ENCODE measurements at regions of chr11 and their contacts with region 1.

Region 1: DNA sequence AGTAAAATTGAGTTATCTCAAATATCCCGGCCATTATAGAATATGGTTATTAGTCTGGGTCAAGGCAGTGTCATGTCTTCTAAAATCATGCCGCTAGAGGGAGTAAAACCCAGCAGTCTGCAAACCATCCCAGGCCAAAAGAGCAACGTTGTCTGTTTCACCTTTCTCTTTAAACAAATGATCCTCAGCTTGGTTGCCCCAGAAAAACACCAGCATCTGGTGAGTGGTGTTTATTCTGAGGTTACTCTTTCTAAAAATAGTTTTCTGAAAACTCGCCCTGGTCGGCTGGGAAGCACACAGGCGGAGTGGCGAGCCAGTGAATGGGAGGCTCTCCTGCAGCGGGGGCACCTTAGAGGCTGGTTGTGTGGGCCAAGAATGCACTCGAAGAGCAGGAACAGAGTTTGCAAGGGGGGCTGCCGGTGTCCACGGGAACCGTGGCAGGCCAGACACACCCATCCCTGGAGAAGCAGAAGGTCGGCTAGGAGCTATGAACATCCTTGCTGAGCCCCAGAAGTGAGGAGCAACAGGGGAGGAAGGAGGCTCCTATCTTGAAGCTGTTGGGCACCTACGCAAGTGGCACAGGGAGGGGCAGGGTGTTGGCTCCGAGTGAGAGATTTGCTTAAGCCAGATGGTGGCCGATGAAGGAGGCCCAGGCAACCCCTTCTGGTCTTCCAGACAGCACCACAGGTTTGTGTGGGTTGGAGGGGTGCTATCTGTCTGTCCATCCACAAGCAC is 297.1 kb downstream of the ETS1 start:
- DNase-seq: peak; percentile 58
- H3K4me3 Mint-ChIP-seq: peak overlapping the region; percentile 30
- H3K27ac Mint-ChIP-seq: peak overlapping the region; percentile 82
- H3K4me1 Mint-ChIP-seq: peaks cover 30% of the 10 kb centered on the region
- H3K27me3 Mint-ChIP-seq: no peaks in the 10 kb centered on the region
- CTCF ChIP-seq: peak; percentile 35

Region 2: DNA sequence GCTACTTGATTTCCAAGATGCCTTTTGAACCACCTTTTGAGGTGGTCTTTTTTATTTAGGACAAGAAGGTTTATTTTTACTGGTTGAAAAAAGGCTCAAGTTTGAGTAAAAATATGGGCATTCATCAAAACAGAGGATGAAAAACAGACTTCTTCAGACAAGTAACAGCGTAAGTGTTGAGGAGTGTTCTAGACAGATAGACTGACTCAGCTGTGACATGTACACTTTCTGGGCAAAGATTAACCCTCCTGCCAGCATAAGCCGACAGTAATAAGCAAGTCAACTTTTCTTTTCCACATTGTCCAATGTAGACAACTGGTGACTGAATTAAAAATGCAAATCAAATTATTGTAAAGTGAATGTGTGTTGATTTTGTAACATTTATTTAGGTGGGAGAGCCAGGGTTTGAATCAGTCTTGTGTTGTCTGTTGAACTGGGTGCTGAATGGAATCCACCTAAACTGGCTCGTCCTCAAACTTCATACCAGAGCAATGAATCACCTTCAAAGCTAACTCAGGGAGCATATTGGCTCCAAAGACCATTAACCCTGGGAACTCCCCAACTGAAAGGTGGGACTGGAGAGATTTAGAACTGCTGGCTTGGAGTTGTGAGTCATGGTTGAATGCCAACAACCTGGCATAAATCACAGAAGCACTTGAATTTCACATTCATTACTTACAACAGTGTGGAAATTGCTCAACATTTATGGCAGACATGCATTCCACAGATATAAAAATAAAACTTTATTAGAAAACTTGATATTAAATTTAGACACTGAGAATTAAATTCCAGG is 79.9 kb before region 1 on chr11:
- CTCF ChIA-PET with region 1: interaction called, 3 read pairs
- intact Hi-C with region 1: loop called (anchors 2 kb)
- DNase-seq: peak; percentile 76
- H3K4me3 Mint-ChIP-seq: no peak overlapping the region
- H3K27ac Mint-ChIP-seq: peak overlapping the region; percentile 72
- H3K4me1 Mint-ChIP-seq: peaks cover 33% of the 10 kb centered on the region
- H3K27me3 Mint-ChIP-seq: no peaks in the 10 kb centered on the region
- CTCF ChIP-seq: no peak

Region 3: DNA sequence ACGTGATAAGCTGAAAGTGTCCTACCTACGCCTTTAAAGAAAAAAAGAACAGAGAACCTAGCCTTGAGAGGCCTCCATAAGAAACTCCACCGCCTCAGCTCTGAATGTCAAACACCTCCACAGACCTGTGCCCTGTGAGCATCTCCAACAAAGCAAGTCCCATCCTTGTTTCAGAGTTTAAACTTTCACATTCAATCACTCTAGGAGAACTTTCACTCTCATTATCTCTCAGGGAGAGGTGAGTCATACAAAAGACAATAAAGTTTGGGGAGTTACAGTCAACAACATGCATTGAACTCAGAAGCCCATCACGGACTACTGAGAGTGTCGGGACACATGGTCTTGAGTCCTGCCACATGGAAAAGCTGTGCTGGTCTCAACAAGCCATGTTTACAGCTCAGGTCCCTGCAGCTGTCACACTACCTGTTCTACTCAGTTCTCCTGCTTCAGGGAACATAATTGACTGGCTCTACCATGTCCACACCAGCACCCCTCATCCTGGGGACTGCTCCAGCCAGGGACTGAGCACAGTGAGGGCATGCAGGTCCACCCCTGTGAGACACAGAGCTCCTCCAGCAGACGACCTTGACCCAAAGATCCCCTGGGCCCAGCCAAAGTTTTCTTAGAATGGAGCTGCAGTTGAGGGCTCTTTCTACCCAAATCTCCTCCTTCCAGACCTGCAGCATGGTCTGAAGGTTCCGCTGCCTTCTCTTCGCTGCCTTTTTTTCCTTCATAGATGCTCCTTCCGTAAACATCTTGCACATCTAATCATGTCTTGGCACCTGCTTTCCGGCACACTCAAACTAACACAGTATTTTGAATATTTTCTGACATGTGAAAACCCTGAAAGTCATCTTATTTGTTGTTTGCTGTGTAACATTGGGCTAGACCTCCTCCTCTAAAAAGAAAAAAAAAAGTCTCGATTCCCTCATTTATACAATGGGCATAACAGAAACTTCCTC is 182.1 kb after region 1 on chr11:
- CTCF ChIA-PET with region 1: interaction called, 5 read pairs
- intact Hi-C with region 1: loop called (anchors 5 kb)
- DNase-seq: no peak
- H3K4me3 Mint-ChIP-seq: no peak overlapping the region
- H3K27ac Mint-ChIP-seq: no peak overlapping the region
- H3K4me1 Mint-ChIP-seq: peaks cover 59% of the 10 kb centered on the region
- H3K27me3 Mint-ChIP-seq: no peaks in the 10 kb centered on the region
- CTCF ChIP-seq: no peak

Region 4: DNA sequence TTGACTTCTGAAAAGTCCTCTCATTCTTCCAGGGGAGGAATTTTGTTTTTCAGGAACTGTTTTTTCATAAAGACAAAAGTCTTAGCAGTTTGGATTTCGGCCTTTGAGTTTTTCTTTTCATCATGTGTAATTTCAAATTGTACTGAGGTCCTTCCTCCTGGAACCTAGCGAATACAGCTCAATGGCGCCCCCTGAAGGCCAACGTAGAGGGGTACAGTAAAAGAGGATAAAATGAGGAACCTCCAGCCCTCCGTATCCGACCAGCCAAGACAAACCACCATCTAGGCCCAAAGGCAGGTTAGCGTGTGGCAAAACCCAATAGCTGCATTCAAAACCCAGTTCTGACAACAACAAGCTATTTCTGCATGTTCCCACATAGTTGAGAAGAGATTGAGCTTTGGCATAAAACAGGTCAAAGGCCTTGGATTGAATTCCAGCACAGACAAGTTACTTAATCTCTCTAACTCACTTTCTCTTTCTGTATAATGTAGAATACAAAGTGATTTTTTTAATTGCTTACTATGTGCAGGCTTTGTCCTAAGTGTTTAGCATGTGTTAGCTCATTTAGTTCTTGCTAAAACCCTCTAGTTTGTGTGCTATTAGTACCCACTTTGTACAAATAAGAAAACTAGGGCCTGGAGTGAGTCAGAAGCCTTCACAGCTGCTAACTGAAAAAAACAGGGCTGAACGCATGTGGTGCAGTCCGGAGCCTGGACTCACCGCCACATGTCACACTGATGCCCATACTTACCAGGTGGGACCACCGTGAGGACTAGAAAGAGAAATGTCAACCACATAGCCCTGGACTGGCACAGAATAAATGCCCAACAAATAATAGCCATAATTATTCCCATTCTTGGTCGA is 340.3 kb after region 1 on chr11:
- CTCF ChIA-PET with region 1: interaction called, 9 read pairs
- intact Hi-C with region 1: loop called (anchors 1 kb)
- DNase-seq: peak; percentile 81
- H3K4me3 Mint-ChIP-seq: no peak overlapping the region
- H3K27ac Mint-ChIP-seq: no peak overlapping the region
- H3K4me1 Mint-ChIP-seq: no peaks in the 10 kb centered on the region
- H3K27me3 Mint-ChIP-seq: no peaks in the 10 kb centered on the region
- CTCF ChIP-seq: peak; percentile 44

Region 5: DNA sequence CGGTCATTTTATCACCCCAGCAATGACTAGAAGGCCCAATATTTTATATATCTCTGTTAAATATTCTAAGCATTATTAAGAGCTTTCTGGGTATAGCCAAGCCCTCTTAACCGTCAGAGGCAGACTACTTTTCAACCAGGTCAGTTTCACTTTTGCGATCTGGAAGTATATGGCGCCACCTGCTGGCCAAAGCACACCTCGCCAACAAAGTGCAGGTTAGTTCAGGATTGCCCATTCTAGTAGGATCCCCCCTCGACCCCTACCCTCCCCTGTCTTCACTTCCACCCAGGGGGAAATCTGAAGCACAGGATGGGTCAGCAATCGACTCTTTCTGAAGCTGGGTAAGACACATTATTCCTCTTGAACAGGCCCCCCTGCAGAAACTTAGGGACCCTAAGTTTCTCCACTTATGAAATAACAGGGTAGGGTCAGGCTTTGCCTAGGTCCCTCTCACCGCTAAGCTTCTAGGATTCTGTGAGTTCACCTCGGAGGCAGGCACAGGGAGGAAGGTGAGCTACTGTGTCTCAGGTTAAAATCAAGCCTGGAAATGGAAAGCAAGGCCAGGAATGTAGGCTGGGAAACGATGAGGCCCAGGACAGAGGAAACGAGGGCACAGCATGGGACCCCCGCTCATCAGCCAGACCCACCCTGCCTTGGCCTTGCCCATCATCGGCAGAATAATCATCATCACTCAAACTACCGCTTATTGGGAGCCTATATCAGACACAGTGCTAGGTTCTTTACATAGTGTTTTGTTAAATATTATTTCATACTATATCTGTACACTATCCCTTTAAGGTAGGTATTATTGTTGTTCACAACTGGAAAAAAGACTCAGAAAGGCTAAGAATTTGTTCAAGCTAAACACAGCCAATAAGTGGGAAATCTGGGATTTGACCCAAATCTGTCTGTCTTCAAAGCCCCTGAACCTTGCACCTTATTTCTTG is 541.2 kb after region 1 on chr11:
- CTCF ChIA-PET with region 1: no interaction called
- intact Hi-C with region 1: loop called (anchors 10 kb)
- DNase-seq: peak; percentile 76
- H3K4me3 Mint-ChIP-seq: peak overlapping the region; percentile 44
- H3K27ac Mint-ChIP-seq: peak overlapping the region; percentile 50
- H3K4me1 Mint-ChIP-seq: peaks cover 8% of the 10 kb centered on the region
- H3K27me3 Mint-ChIP-seq: no peaks in the 10 kb centered on the region
- CTCF ChIP-seq: peak; percentile 64

Measured in Calu3 (cell line).